GM10248 (cell line): ENCODE measurements at regions of chr2 and their contacts with region 1.

Region 1: GRCh38 chr2:61993444-61994024 is 88.1 kb downstream of the COMMD1 start:
- DNase-seq: peak; percentile 59
- CTCF ChIP-seq: peak; percentile 86

Region 2: GRCh38 chr2:62007555-62007954 is 14.0 kb after region 1 on chr2:
- CTCF ChIA-PET with region 1: interaction called, 18 read pairs
- POLR2A ChIA-PET with region 1: interaction called, 3 read pairs
- DNase-seq: no peak
- CTCF ChIP-seq: no peak

Region 3: GRCh38 chr2:62197011-62197924 is 203.7 kb after region 1 on chr2:
- CTCF ChIA-PET with region 1: interaction called, 10 read pairs
- POLR2A ChIA-PET with region 1: no interaction called
- DNase-seq: peak; percentile 43
- CTCF ChIP-seq: peak; percentile 25

Region 4: DNA sequence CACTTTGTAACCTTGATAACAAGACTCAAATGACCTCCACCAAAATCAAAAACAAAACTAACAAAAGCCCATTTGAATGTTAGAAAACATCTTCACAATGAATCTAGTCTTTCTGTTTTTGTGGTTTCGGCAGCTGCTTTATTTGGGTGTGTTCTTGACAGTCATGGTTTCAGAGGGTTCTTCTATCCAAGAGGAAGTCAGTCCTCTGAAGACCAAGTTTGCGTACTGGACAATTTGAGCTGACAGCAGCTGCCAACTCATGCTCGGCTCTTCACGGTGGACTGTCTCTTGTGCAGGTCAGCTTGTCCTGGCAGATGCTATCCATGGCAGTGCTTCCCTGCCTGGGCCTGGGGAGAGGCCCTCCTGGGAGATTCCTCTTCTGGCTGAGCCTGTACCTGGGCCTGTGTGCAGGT is 421.5 kb after region 1 on chr2:
- CTCF ChIA-PET with region 1: interaction called, 43 read pairs
- POLR2A ChIA-PET with region 1: no interaction called
- DNase-seq: peak; percentile 65
- CTCF ChIP-seq: no peak